Psoas muscle (tissue), 8 donors: ENCODE measurements at regions of chr5 and their contacts with region 1.

Region 1: GRCh38 chr5:179345433-179346321 is at the start of gene ADAMTS2:
- DNase-seq: peak; percentile 80 to 82
- ATAC-seq: peak; percentile 29 to 66 (median 52)
- H3K4me3 ChIP-seq: peak within 1 kb of the TSS; percentile 73
- H3K27ac ChIP-seq: no peak within 1 kb of the TSS
- H3K4me1 ChIP-seq: peaks cover 6% of the 10 kb centered on the region
- H3K27me3 ChIP-seq: peaks cover 0 to 46% (median 5%) of the 10 kb centered on the region in 3 donors
- CTCF ChIP-seq: no peak
- total RNA-seq, gene ADAMTS2: 1.9 to 3.7 (median 2.5) TPM

Region 2: GRCh38 chr5:179166886-179167841 is 178.5 kb before region 1 on chr5:
- intact Hi-C with region 1: loop called (anchors 5 kb)
- DNase-seq: peak; percentile 58 to 68
- ATAC-seq: peak; percentile 61 to 92 (median 82)
- H3K4me3 ChIP-seq: peak overlapping the region; percentile 49
- H3K27ac ChIP-seq: no peak overlapping the region
- H3K4me1 ChIP-seq: no peaks in the 10 kb centered on the region
- H3K27me3 ChIP-seq: peaks cover 0 to under 1% (median 0%) of the 10 kb centered on the region in 3 donors
- CTCF ChIP-seq: peak; percentile 99

Region 3: GRCh38 chr5:179495906-179496455 is 150.3 kb after region 1 on chr5:
- intact Hi-C with region 1: loop called in 1 of 2 experiments (anchors 10 kb)
- DNase-seq: no peak
- ATAC-seq: no peak
- H3K4me3 ChIP-seq: no peak overlapping the region
- H3K27ac ChIP-seq: no peak overlapping the region
- H3K4me1 ChIP-seq: no peaks in the 10 kb centered on the region
- H3K27me3 ChIP-seq: peaks cover 0 to 10% (median 2%) of the 10 kb centered on the region in 3 donors
- CTCF ChIP-seq: no peak